AG04449 (cell line): ENCODE measurements at regions of chr17 and their contacts with region 1.

Region 1: DNA sequence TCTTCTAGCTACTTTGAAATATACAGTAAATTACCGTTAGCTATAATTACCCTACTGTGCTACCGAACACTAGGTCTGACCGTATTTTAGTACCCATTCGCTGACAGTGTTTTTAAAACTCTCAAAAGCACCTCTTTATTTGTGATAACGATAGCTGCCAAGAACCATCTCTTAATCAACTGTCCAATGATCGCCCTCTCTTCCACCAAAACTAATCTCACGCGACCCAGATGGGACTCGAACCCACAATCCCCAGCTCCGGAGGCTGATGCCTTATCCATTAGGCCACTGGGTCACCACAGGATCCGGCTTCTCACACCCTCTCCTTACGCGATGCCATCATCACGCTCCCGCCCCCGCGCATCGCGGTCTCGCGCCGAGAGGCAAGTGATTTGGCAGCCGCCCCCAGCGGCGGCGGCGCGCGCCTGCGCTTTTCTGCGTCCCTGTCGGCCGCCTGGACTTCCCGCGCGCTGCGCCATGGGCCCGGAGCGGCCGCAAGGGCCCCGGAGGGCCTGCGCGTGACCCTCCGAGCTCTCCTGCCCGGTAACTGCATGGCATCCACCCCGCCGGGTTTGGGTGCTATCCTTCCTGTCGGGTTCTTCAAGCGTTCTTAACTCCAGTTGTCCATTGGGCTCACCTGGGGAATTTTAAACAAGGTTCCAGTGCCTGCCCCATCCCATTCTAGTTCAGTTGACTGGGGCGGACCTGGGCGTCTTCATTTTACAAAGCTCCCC is 15.7 kb upstream of the KPNA2 start:
- DNase-seq: peak; percentile 79
- H3K4me3 ChIP-seq: peak overlapping the region; percentile 67
- CTCF ChIP-seq: peak; percentile 40

Region 2: DNA sequence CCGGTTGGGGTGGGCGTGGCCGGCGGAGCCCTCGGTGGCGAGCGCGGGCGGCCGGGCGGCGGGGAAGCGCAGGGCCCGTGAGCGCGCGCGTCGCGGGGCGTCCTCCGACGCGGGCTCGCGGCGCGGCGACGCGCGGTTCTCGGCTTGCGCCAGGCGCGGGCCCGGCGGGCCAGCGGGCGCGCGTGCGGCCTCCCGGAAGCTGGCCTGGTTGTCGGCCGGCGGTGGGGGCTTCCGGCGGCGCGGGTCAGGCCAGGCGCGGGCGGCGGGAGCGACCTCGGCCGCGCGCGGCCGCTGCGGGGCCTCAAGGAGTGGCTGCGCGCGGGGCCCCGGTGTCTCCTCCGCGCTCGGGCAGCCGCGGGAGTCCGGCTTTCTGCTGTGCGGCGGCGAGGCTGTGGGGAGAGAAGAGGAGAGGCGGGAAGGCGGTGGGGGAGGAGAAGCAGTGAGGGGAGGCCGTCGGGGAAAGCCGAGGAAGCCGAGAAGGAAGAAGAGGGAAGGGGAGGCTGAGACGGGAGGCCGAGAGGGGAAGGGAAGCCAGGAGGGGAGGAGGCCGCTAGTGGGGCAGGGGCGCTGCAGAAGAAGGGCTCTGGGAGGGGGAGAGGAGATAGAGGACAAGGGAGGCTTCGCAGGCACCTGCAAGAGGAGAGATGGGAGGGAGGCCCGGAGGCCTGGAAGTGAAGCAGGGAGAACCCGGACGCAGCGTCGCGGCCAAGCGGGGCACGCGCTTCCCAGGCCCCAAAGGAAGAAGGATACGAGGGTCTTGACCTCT is 26.1 kb before region 1 on chr17:
- CTCF ChIA-PET with region 1: interaction called, 10 read pairs
- POLR2A ChIA-PET with region 1: interaction called, 8 read pairs
- DNase-seq: no peak
- H3K4me3 ChIP-seq: peak overlapping the region; percentile 75
- CTCF ChIP-seq: no peak

Region 3: DNA sequence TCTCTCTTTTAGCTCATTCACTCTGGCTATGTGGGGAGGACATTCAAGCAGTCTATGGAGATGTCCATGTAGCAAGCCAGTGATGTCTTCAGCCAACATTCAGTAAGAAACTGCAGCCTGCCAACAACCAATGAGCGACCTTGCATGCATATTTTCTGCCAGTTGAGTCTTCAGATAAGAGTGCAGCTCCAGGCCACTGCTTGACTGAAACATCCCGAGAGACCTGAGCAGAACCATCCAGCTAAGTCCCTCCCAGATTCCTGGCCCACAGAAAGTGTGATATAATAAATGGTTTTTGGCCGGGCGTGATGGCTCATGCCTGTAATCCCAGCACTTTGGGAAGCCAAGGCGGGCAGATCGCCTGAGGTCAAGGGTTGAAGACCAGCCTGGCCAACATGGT is 13.0 kb before region 1 on chr17:
- CTCF ChIA-PET with region 1: interaction called, 11 read pairs
- POLR2A ChIA-PET with region 1: no interaction called
- DNase-seq: no peak
- H3K4me3 ChIP-seq: no peak overlapping the region
- CTCF ChIP-seq: no peak